ENCODE measurements at regions of chr9 and their contacts with region 1.

Region 1: DNA sequence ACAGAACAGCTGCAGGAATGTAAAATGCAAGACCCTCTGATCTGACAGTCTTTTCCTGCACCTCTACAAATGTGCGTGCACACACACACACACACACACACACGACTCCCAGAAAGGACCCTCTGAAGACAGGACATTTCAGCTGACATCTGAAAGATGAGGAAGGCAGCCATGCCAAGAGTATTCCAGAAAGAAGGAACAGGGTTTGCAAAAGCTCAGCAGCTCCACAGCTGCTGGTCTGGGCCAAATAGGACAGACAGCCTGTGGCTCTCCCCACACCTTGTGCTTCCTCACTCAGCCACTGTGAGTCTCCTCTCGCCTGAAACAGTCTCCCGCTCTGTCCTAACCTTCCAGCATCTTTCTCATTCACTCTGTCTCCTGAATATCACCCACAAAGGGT is 189.0 kb downstream of the PALM2AKAP2 start:
- DNase-seq: peak; percentile 72
- H3K4me3 ChIP-seq: no peak overlapping the region
- H3K27ac ChIP-seq: peak overlapping the region; percentile 91
- H3K4me1 ChIP-seq: peaks cover 27% of the 10 kb centered on the region
- H3K27me3 ChIP-seq: no peaks in the 10 kb centered on the region
- CTCF ChIP-seq: peak; percentile 16 to 31
- POLR2A ChIP-seq: no peak

Region 2: DNA sequence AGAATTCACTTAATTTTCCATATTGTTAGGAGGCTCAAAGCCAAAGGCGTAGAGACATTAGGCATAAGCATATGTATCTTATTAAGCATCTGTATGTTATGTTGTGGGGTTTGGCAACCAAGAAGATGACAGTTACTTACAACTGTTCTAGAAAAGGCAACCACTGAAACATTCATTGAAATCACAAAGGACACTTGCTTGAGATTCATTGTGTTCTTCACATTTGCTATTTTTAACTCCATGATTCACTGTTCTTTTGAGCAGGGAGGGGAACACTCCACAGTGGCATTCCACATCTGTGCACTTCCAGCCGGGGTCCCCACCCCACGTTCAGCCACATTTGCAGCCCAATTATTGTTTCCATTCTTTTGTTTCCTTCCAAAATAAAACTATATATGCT is 81.9 kb before region 1 on chr9:
- CTCF ChIA-PET with region 1: no interaction called
- POLR2A ChIA-PET with region 1: no interaction called
- dilution Hi-C with region 1: no loop called
- intact Hi-C with region 1: no loop called
- DNase-seq: peak; percentile 9
- H3K4me3 ChIP-seq: no peak overlapping the region
- H3K27ac ChIP-seq: no peak overlapping the region
- H3K4me1 ChIP-seq: no peaks in the 10 kb centered on the region
- H3K27me3 ChIP-seq: peaks cover 0 to 3% of the 10 kb centered on the region in 2 experiments
- CTCF ChIP-seq: no peak
- POLR2A ChIP-seq: no peak

Region 3: GRCh38 chr9:109956717-109957440 is 12.1 kb before region 1 on chr9:
- CTCF ChIA-PET with region 1: interaction called, 15 read pairs
- POLR2A ChIA-PET with region 1: no interaction called
- dilution Hi-C with region 1: no loop called
- intact Hi-C with region 1: no loop called
- DNase-seq: no peak
- H3K4me3 ChIP-seq: no peak overlapping the region
- H3K27ac ChIP-seq: no peak overlapping the region
- H3K4me1 ChIP-seq: no peaks in the 10 kb centered on the region
- H3K27me3 ChIP-seq: no peaks in the 10 kb centered on the region
- CTCF ChIP-seq: no peak
- POLR2A ChIP-seq: no peak

Region 4: GRCh38 chr9:110015759-110016158 is 46.7 kb after region 1 on chr9:
- CTCF ChIA-PET with region 1: interaction called, 12 read pairs
- POLR2A ChIA-PET with region 1: no interaction called
- dilution Hi-C with region 1: no loop called
- intact Hi-C with region 1: loop called (anchors 1 kb)
- DNase-seq: peak; percentile 95
- H3K4me3 ChIP-seq: no peak overlapping the region
- H3K27ac ChIP-seq: peak overlapping the region; percentile 100
- H3K4me1 ChIP-seq: peaks cover 28% of the 10 kb centered on the region
- H3K27me3 ChIP-seq: no peaks in the 10 kb centered on the region
- CTCF ChIP-seq: no peak
- POLR2A ChIP-seq: no peak

Region 5: GRCh38 chr9:110048403-110048975 is 79.5 kb after region 1 on chr9:
- CTCF ChIA-PET with region 1: interaction called, 4 read pairs
- POLR2A ChIA-PET with region 1: no interaction called
- dilution Hi-C with region 1: no loop called
- intact Hi-C with region 1: loop called (anchors 1 kb)
- DNase-seq: peak; percentile 88
- H3K4me3 ChIP-seq: peak overlapping the region; percentile 99 to 100 (median 100)
- H3K27ac ChIP-seq: peak overlapping the region; percentile 98
- H3K4me1 ChIP-seq: peaks cover 28% of the 10 kb centered on the region
- H3K27me3 ChIP-seq: no peaks in the 10 kb centered on the region
- CTCF ChIP-seq: no peak
- POLR2A ChIP-seq: peak; percentile 96

Region 6: DNA sequence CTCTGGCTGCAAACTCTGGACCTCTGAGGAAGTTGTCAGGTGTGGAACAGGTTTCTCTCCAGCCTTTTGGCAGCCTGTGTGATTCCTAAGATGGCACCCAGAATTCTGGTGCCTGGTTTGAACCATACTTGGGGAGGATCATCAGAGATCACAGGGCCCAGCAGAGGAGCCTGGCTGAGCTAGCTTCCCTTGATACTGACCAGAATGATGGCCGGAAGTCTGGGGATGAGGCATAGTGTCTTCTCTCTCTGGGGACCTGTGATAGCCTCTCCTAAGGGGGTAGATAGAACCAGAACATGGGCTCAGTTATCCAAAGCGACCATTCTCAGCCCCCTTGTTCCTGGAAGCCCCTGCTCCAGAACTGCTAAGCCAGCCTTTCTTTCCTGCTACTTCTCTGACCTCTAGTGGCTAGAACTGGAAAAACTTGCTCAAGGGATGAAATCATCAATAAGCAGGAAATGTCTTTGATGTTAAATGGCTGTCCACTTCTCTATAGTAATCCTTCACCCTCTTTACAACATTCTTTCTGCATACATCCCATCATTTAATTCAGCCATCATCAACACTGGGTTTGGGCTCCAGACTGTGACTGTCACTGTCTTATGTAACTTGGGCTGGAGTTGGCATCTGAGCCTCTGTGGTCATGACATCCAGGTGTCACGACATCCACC is 183.8 kb after region 1 on chr9:
- CTCF ChIA-PET with region 1: no interaction called
- POLR2A ChIA-PET with region 1: no interaction called
- dilution Hi-C with region 1: no loop called
- intact Hi-C with region 1: loop called (anchors 2 kb)
- DNase-seq: peak; percentile 84
- H3K4me3 ChIP-seq: no peak overlapping the region
- H3K27ac ChIP-seq: peak overlapping the region; percentile 36
- H3K4me1 ChIP-seq: peaks cover 13% of the 10 kb centered on the region
- H3K27me3 ChIP-seq: no peaks in the 10 kb centered on the region
- CTCF ChIP-seq: peak; percentile 63 to 65
- POLR2A ChIP-seq: no peak

Region 7: DNA sequence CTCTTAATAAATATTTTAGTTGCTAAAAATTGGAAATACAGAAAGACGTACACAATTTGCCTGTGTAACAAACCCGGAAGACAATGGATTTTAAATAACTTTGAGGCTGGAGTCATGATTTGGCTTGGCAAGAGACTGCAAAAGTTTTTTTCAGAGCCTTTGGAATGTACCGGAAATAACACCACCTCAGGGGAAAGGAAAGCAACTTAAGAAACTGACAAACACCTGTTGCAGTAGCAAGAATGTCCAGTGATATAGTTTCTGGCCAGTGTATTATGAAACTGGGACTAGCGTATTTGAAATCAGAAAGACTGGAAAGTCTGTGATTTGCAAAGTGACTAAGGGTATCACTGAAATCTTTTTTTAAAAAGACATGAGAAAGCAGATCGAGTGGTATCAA is 700.4 kb after region 1 on chr9:
- CTCF ChIA-PET with region 1: no interaction called
- POLR2A ChIA-PET with region 1: no interaction called
- dilution Hi-C with region 1: no loop called
- intact Hi-C with region 1: no loop called
- DNase-seq: peak; percentile 29
- H3K4me3 ChIP-seq: no peak overlapping the region
- H3K27ac ChIP-seq: no peak overlapping the region
- H3K4me1 ChIP-seq: peaks cover 5% of the 10 kb centered on the region
- H3K27me3 ChIP-seq: no peaks in the 10 kb centered on the region
- CTCF ChIP-seq: no peak
- POLR2A ChIP-seq: no peak